GM18951 (cell line): ENCODE measurements at regions of chr5 and their contacts with region 1.

Region 1: GRCh38 chr5:59810041-59810440 is 83.5 kb downstream of the PDE4D start:
- POLR2A ChIP-seq: no peak

Region 2: DNA sequence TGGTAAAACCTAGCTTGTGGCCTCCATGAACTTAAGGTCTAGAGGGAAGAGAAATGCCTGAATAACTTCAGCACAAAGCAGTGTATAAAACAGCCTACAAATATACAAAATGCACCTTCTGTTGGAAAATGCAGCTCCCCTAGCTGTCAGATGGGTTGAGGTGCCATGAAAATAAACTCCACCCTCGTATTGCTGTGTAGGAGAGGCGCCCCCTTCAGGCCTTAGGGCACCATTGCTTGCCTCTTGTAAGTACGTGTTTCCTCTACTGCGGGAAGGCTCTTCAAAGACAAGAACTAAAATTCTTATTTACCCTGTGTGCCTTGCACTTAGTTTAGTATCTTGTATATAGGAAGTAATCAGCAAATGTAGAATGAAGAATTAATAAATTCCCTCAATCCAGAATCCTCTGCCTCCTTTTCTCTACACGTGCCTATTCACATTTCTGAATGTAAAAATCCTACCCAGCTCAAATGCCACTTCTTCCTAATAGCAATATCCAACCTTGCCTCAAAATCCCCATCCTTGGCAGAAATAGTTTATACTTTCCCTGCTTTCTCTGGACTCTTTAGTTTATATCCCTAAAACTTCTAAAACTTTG is 477.2 kb after region 1 on chr5:
- in situ Hi-C with region 1: loop called (anchors 10 kb)
- POLR2A ChIP-seq: no peak

Region 3: DNA sequence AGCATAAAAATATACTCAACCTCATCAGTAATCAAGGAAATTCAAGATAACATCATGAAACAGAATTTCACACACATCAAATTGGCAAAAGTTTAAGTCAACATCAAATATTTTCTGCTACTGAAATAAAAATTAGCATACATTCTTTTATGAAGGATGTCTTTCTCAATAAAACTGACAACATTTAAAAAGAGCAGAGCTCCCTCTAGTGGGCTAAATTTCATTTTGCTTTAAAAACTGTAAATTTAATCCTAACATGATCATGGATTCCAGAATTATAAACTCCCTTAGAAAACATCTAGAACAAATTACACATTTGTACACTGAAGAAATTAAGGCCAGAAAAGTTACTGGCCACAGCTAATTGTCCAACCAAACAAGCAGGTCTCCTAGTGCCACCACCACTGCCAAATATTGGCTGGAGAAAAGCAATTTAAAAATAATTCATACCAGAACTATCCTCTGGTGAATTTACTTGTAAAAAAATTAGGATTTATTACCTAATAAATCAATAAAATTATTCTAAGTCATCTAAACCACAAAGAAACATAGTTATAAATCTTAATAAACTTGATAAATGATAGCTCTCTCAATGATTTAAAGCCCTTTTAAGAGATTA is 858.8 kb after region 1 on chr5:
- in situ Hi-C with region 1: loop called (anchors 25 kb)
- POLR2A ChIP-seq: no peak

Region 4: GRCh38 chr5:60916646-60917045 is 1106.6 kb after region 1 on chr5:
- in situ Hi-C with region 1: loop called (anchors 25 kb)
- POLR2A ChIP-seq: no peak